ENCODE measurements at regions of chr17 and their contacts with region 1.

Region 1: GRCh38 chr17:29116804-29117772 is 63.1 kb downstream of the MYO18A start:
- DNase-seq: peak; percentile 84
- H3K4me3 Mint-ChIP-seq: no peak overlapping the region
- H3K27ac Mint-ChIP-seq: no peak overlapping the region
- H3K4me1 Mint-ChIP-seq: peaks cover 7% of the 10 kb centered on the region
- H3K27me3 Mint-ChIP-seq: no peaks in the 10 kb centered on the region

Region 2: GRCh38 chr17:28726226-28727130 is 390.6 kb before region 1 on chr17 and contains the start of gene TLCD1:
- CTCF ChIA-PET with region 1: interaction called, 20 read pairs
- DNase-seq: peak; percentile 94
- H3K4me3 Mint-ChIP-seq: peak within 1 kb of the TSS; percentile 94
- H3K27ac Mint-ChIP-seq: peak within 1 kb of the TSS; percentile 100
- H3K4me1 Mint-ChIP-seq: peaks cover 72% of the 10 kb centered on the region
- H3K27me3 Mint-ChIP-seq: no peaks in the 10 kb centered on the region

Region 3: GRCh38 chr17:28967221-28968140 is 149.6 kb before region 1 on chr17:
- CTCF ChIA-PET with region 1: interaction called, 283 read pairs
- DNase-seq: no peak
- H3K4me3 Mint-ChIP-seq: no peak overlapping the region
- H3K27ac Mint-ChIP-seq: no peak overlapping the region
- H3K4me1 Mint-ChIP-seq: no peaks in the 10 kb centered on the region
- H3K27me3 Mint-ChIP-seq: peaks cover 51% of the 10 kb centered on the region

Region 4: DNA sequence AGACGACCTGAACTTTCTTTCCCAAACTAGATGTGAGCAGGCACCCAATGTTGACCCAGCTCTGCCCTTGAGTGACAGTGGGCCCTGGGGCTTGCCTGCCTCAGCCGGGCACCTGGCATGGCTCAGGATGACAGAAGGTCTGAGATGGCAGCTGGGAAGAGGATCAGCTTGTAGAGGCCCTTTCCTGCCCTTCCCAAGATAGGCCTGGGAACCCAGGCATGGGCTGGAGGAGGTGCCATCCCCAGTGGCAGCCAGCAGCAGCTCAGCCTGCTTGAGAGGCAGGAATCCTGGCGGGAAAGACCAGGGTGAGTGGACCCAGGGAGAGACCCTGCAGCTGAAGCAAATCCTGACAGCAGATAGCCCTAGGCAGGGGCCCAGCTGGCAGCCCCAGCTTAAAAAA is 15.0 kb before region 1 on chr17:
- CTCF ChIA-PET with region 1: interaction called, 14 read pairs
- DNase-seq: no peak
- H3K4me3 Mint-ChIP-seq: no peak overlapping the region
- H3K27ac Mint-ChIP-seq: no peak overlapping the region
- H3K4me1 Mint-ChIP-seq: peaks cover 7% of the 10 kb centered on the region
- H3K27me3 Mint-ChIP-seq: no peaks in the 10 kb centered on the region

Region 5: DNA sequence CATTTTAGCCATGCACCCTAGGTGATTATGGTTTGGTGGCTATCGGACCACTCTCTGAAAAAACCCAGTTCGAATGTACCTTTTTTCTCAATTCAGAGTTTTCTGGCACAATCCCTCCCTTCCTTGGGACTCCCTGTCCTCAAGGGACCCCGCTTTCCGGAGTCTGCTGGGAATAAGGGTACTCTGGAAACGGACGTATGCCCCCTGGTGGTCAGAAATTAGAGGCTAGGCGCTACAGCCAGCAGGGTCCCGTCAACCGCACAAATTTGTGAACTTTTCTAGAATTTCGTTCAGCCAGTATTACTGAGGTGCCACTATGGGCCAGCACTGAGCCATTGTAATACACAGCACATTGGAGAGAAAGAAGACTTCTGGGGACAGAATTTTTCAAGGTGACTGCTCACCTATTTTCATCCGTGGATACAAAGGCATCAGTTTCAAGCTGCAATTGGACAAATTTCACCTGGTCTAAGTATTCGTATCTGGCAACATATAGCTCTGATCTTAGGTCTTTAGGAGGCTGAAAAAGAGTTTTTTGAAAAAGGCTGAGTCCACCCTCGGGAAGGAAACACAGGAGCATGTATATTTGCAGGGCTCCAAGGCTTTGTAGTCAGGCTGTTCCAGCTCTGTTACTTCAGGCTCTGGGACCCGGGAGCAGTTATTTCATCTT is 102.4 kb after region 1 on chr17:
- CTCF ChIA-PET with region 1: interaction called, 10 read pairs
- DNase-seq: peak; percentile 83
- H3K4me3 Mint-ChIP-seq: no peak overlapping the region
- H3K27ac Mint-ChIP-seq: no peak overlapping the region
- H3K4me1 Mint-ChIP-seq: peaks cover 7% of the 10 kb centered on the region
- H3K27me3 Mint-ChIP-seq: peaks cover 15% of the 10 kb centered on the region

Region 6: GRCh38 chr17:29233301-29233700 is 116.2 kb after region 1 on chr17:
- CTCF ChIA-PET with region 1: no interaction called
- DNase-seq: no peak
- H3K4me3 Mint-ChIP-seq: no peak overlapping the region
- H3K27ac Mint-ChIP-seq: no peak overlapping the region
- H3K4me1 Mint-ChIP-seq: no peaks in the 10 kb centered on the region
- H3K27me3 Mint-ChIP-seq: no peaks in the 10 kb centered on the region

Region 7: DNA sequence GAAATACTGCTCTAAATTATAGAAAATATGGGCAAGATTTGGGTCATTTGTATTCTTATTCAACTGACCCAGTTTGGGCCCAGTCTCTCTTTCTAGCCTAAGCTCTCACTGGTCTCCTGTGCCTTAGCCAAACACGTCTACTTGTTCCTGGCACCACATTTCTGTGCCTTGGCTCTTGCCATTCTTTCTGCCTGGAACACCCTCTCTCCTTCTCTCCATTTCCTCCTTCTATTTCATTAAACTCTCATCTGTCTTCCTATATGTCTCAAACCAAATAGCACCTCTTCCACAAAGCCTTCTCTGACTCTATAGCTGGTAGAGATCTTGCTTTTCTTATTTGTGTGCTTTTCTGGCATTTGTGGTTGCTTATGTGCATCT is 214.6 kb after region 1 on chr17:
- CTCF ChIA-PET with region 1: no interaction called
- DNase-seq: no peak
- H3K4me3 Mint-ChIP-seq: no peak overlapping the region
- H3K27ac Mint-ChIP-seq: no peak overlapping the region
- H3K4me1 Mint-ChIP-seq: no peaks in the 10 kb centered on the region
- H3K27me3 Mint-ChIP-seq: no peaks in the 10 kb centered on the region

Region 8: DNA sequence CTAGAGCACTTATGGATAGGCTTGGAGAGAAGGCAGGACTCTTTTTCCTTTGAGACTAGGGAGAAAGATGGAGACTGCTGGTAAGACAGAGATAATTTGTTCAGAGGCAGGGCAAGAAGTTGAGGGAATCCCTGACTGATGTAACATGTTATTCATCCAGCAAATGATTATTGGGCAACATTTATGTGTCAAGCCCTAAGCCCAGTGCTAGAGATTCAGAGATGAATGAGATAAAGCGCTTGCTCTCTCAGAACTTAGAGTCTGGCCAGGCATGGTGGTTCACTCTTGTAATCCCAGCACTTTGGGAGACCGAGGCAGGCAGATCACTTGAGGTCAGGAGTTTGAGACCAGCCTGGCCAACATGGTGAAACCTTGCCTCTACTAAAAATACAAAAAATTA is 224.7 kb after region 1 on chr17:
- CTCF ChIA-PET with region 1: no interaction called
- DNase-seq: no peak
- H3K4me3 Mint-ChIP-seq: no peak overlapping the region
- H3K27ac Mint-ChIP-seq: no peak overlapping the region
- H3K4me1 Mint-ChIP-seq: no peaks in the 10 kb centered on the region
- H3K27me3 Mint-ChIP-seq: peaks cover 19% of the 10 kb centered on the region

Measured in activated naive CD4-positive, alpha-beta T cell treated with anti-CD3 and anti-CD28 coated beads, Interleukin-2, amount 10 ng/mL, durations not matched to agents 7 days and 5 days (primary cell).